ENCODE measurements at regions of chr2 and their contacts with region 1.

Region 1: DNA sequence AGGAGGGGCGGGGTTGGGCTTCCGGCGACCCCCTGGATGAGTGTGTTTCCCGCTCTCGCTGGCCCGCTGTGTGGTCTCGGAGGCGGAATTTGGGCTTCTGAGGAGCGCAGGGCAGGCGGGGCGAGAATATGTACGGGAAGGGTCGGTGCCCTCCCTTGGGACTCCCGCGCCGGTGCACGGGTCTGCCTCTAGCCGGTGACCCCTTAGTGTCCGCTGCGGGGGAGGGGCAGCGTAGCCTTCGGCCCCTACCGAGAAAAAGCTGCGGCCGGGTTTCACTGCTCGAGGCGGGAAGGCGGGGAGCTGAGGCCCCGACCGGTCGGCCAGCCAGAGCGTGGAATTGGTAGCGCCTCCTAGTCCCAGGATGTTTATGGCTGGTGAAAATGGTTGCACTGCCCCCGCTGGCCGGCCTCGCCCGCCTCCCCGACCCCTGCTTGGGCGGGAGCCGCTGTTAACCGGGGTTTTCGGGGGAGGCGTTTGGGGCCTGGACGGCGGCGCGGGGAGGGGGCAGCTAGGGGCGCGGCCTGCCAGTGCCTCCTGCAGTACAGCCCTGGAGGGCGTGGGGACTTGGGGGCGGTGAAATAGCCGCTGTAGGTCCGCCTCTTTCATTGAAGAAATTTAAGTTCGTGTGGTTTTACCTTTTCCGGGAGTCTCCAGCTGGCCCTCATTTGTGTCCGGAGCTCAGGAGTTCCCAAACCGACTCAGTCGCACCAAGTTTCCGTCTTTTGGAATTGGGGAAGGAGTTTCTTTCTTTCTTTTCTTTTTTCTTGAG is at the start of gene UGP2:
- DNase-seq: peak; percentile 90
- ATAC-seq: peak; percentile 84
- H3K4me3 ChIP-seq: peak within 1 kb of the TSS; percentile 82 to 95 (median 85)
- H3K27ac ChIP-seq: peak within 1 kb of the TSS; percentile 94
- H3K4me1 ChIP-seq: peaks cover 42% of the 10 kb centered on the region
- H3K27me3 ChIP-seq: no peaks in the 10 kb centered on the region; a peak in 1 of 5 replicates
- CTCF ChIP-seq: peak; percentile 68
- EP300 ChIP-seq: no peak; a peak in 2 of 4 replicates
- POLR2A ChIP-seq: peak; percentile 78 to 90
- RAD21 ChIP-seq: peak; percentile 50
- total RNA-seq, gene UGP2: 134 and 210 TPM in 2 replicates

Region 2: GRCh38 chr2:63588385-63589147 is 252.9 kb before region 1 on chr2 and contains the starts of genes MDH1 and WDPCP:
- CTCF ChIA-PET with region 1: no interaction called
- POLR2A ChIA-PET with region 1: interaction called, 19 read pairs
- in situ Hi-C with region 1: no loop called
- intact Hi-C with region 1: loop called (anchors 2 kb)
- DNase-seq: peak; percentile 100
- ATAC-seq: peak; percentile 94
- H3K4me3 ChIP-seq: peak within 1 kb of the TSS; percentile 89 to 94 (median 94)
- H3K27ac ChIP-seq: peak within 1 kb of the TSS; percentile 79
- H3K4me1 ChIP-seq: peaks cover 46% of the 10 kb centered on the region
- H3K27me3 ChIP-seq: no peaks in the 10 kb centered on the region; a peak in 1 of 5 replicates
- CTCF ChIP-seq: no peak
- EP300 ChIP-seq: peak; percentile 9 to 54; a peak in 1 of 4 replicates
- POLR2A ChIP-seq: peak; percentile 89 to 90
- RAD21 ChIP-seq: peak; percentile 45; the same call in 1 of the 2 replicates
- total RNA-seq, gene MDH1: 415 and 596 TPM in 2 replicates
- total RNA-seq, gene WDPCP: 4.6 and 5.2 TPM in 2 replicates

Region 3: DNA sequence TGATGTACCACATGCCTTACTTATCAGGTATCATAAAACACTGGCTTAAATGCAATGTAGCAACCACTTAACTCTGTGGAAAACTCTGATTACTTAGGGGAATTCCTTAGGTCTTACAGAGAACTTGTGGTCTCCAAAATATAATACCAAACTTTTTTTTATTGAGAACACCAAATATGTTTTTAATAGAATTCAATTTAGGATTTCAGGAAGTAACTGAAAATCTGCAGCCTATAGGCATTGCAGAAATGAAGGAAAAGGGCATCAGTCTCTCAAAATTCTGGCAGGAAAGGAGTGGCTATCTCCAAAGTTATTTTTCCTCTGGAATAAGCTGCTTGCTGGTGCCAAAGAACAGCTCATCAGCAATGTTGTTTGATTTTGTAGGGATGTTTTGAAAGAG is 105.1 kb before region 1 on chr2:
- CTCF ChIA-PET with region 1: no interaction called
- POLR2A ChIA-PET with region 1: interaction called, 73 read pairs
- in situ Hi-C with region 1: no loop called
- intact Hi-C with region 1: loop called (anchors 2 kb)
- DNase-seq: no peak
- ATAC-seq: no peak
- H3K4me3 ChIP-seq: no peak overlapping the region
- H3K27ac ChIP-seq: peak overlapping the region; percentile 74
- H3K4me1 ChIP-seq: peaks cover 72% of the 10 kb centered on the region
- H3K27me3 ChIP-seq: no peaks in the 10 kb centered on the region
- CTCF ChIP-seq: no peak
- EP300 ChIP-seq: no peak
- POLR2A ChIP-seq: no peak
- RAD21 ChIP-seq: no peak

Region 4: GRCh38 chr2:63827749-63828148 is 13.7 kb before region 1 on chr2:
- CTCF ChIA-PET with region 1: no interaction called
- POLR2A ChIA-PET with region 1: interaction called, 56 read pairs
- in situ Hi-C with region 1: no loop called
- intact Hi-C with region 1: no loop called
- DNase-seq: peak; percentile 92
- ATAC-seq: peak; percentile 97
- H3K4me3 ChIP-seq: no peak overlapping the region
- H3K27ac ChIP-seq: no peak overlapping the region
- H3K4me1 ChIP-seq: peaks cover 15% of the 10 kb centered on the region
- H3K27me3 ChIP-seq: no peaks in the 10 kb centered on the region
- CTCF ChIP-seq: no peak
- EP300 ChIP-seq: peak in 1 of 2 experiments; percentile 86; a peak in 2 of 4 replicates
- POLR2A ChIP-seq: no peak
- RAD21 ChIP-seq: no peak

Region 5: GRCh38 chr2:63861220-63861822 is 19.9 kb after region 1 on chr2:
- CTCF ChIA-PET with region 1: no interaction called
- POLR2A ChIA-PET with region 1: interaction called, 21 read pairs
- in situ Hi-C with region 1: no loop called
- intact Hi-C with region 1: loop called (anchors 1 kb)
- DNase-seq: peak; percentile 54
- ATAC-seq: peak; percentile 60
- H3K4me3 ChIP-seq: no peak overlapping the region
- H3K27ac ChIP-seq: no peak overlapping the region
- H3K4me1 ChIP-seq: peaks cover 23% of the 10 kb centered on the region
- H3K27me3 ChIP-seq: no peaks in the 10 kb centered on the region
- CTCF ChIP-seq: peak; percentile 55
- EP300 ChIP-seq: no peak
- POLR2A ChIP-seq: no peak
- RAD21 ChIP-seq: peak; percentile 81

Region 6: DNA sequence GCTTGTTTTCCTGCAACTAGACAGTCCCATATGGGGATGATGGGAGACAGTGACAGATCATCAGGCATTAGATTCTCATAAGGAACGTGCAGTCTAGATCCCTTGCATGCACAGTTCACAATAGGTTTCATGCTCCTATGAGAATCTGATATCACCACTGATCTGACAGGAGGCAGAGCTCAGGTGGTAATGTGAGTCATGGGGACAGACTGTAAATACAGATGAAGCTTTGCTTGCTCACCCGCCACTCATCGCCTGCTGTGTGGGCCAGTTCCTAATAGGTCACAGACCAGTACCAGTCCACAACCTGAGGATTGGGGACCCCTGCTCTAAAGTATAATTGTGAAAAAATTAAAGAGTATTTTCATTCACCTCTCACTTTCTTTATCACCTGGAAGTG is 1312.1 kb after region 1 on chr2:
- CTCF ChIA-PET with region 1: no interaction called
- POLR2A ChIA-PET with region 1: no interaction called
- in situ Hi-C with region 1: no loop called
- intact Hi-C with region 1: no loop called
- DNase-seq: peak; percentile 44
- ATAC-seq: peak; percentile 82
- H3K4me3 ChIP-seq: no peak overlapping the region
- H3K27ac ChIP-seq: no peak overlapping the region
- H3K4me1 ChIP-seq: peaks cover 6% of the 10 kb centered on the region; the same call in 1 of the 2 replicates
- H3K27me3 ChIP-seq: no peaks in the 10 kb centered on the region
- CTCF ChIP-seq: no peak
- EP300 ChIP-seq: no peak
- POLR2A ChIP-seq: no peak
- RAD21 ChIP-seq: no peak